Prostate gland (tissue), 2 donors: ENCODE measurements at regions of chr9 and their contacts with region 1.

Region 1: DNA sequence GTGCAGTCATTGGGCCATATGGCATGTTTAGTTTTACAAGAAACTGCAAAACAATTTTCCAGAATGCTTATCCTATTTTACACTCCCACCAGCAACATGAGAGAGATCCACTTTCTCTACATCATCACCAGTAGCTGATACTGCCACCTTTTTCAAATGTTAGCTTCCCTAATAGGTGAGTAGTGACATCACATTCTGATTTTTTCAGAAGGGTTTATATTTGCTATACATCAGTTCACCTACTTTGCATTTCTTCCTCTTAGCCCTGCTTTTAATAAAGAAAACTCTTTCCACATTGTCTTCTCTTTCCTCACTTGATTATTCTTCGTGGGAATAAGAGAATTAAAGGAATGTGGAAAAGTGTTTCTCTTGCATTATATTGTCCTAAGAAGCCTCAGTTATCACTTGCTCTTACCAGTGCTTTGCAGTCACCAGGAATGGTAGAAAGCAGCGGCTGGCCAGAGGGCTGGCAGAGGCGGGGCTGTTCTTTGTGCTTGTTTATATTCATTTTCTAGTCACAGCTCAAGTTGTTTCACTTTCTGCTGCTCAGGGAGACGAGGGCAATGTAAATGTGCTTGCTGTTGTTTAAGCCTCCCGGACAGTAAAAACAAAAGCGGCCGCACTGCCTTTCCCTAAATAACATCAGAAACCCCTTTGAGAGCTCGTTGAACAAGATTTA is 164.8 kb downstream of the HSD17B3 start:
- DNase-seq: peak; percentile 82
- H3K4me3 ChIP-seq: no peak overlapping the region
- H3K27ac ChIP-seq: peak overlapping the region; percentile 83 to 86
- H3K4me1 ChIP-seq: peaks cover 32% of the 10 kb centered on the region
- H3K27me3 ChIP-seq: no peaks in the 10 kb centered on the region
- CTCF ChIP-seq: no peak
- POLR2A ChIP-seq: no peak

Region 2: DNA sequence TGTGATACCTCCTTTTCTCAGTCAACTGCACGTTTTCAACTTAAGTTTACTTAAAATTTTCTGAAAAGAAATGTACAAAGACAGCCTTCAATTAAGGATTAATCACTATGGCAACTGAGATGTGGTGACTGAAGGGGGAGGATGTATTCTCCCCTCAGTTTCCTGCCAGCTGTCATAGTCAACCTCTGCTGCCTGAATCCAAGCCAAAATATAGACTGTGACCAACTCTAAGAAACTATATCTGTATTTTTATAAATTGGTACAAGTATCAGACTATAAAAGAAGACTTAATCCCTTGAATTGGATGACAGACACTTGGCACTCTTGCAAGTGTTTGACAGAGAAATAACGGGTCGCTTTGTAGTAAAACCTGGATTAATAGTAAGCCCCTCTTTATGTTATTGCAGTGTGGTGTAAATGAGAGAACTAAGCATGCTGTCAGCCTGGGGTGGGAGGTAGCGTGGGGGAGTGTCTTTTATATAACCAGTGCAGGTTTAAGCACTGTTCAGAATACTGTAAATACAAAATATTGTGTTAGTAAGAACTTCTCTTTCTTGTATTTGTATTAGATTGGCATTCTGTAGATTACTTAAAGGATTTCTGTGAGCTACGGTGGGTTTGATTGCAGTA is 155.3 kb before region 1 on chr9:
- intact Hi-C with region 1: no loop called
- DNase-seq: no peak
- H3K4me3 ChIP-seq: no peak overlapping the region
- H3K27ac ChIP-seq: no peak overlapping the region
- H3K4me1 ChIP-seq: no peaks in the 10 kb centered on the region
- H3K27me3 ChIP-seq: no peaks in the 10 kb centered on the region
- CTCF ChIP-seq: no peak
- POLR2A ChIP-seq: no peak

Region 3: GRCh38 chr9:96020792-96021550 is 116.2 kb before region 1 on chr9:
- intact Hi-C with region 1: loop called (anchors 5 kb)
- DNase-seq: no peak
- H3K4me3 ChIP-seq: peak overlapping the region; percentile 48 to 51
- H3K27ac ChIP-seq: peak overlapping the region; percentile 84
- H3K4me1 ChIP-seq: no peaks in the 10 kb centered on the region
- H3K27me3 ChIP-seq: no peaks in the 10 kb centered on the region
- CTCF ChIP-seq: peak in 1 of 4 experiments; percentile 25
- POLR2A ChIP-seq: peak; percentile 31

Region 4: GRCh38 chr9:96080364-96080763 is 56.8 kb before region 1 on chr9:
- intact Hi-C with region 1: loop called (anchors 5 kb)
- DNase-seq: peak; percentile 93
- H3K4me3 ChIP-seq: no peak overlapping the region
- H3K27ac ChIP-seq: peak overlapping the region in 1 of 2 donors; percentile 44
- H3K4me1 ChIP-seq: no peaks in the 10 kb centered on the region
- H3K27me3 ChIP-seq: no peaks in the 10 kb centered on the region
- CTCF ChIP-seq: no peak
- POLR2A ChIP-seq: no peak

Region 5: DNA sequence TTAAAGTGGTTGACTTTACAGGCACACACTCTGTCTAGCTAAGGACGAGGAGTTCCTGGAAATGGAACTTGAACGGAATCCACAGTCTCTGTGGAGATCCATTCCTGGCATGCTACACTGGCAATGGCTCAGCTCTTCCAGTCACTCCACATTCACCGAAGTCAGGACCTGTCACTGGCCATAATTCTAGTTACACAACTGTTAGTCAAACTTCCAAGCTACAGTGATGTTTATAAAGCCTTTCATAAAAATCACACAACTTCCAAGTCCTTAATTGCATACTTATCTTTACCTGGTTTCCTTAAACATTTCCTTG is 466.8 kb after region 1 on chr9:
- intact Hi-C with region 1: no loop called
- DNase-seq: peak; percentile 88
- H3K4me3 ChIP-seq: no peak overlapping the region
- H3K27ac ChIP-seq: peak overlapping the region; percentile 67 to 83
- H3K4me1 ChIP-seq: peaks cover 3% of the 10 kb centered on the region
- H3K27me3 ChIP-seq: no peaks in the 10 kb centered on the region
- CTCF ChIP-seq: no peak
- POLR2A ChIP-seq: no peak